Natural killer cell (primary cell): ENCODE measurements at regions of chr10 and their contacts with region 1.

Region 1: GRCh38 chr10:71383972-71384687 is 12.6 kb upstream of the CDH23 start:
- DNase-seq: peak; percentile 77 to 82
- ATAC-seq: peak; percentile 89 to 98 (median 97)
- H3K4me3 ChIP-seq: no peak overlapping the region
- H3K4me3 Mint-ChIP-seq: no peak overlapping the region
- H3K27ac ChIP-seq: no peak overlapping the region
- H3K27ac Mint-ChIP-seq: no peak overlapping the region
- H3K4me1 ChIP-seq: peaks cover 8% of the 10 kb centered on the region
- H3K4me1 Mint-ChIP-seq: peaks cover 0 to 8% of the 10 kb centered on the region in 2 donors
- H3K27me3 ChIP-seq: no peaks in the 10 kb centered on the region
- H3K27me3 Mint-ChIP-seq: peaks cover 0 to 10% of the 10 kb centered on the region in 2 donors
- CTCF ChIP-seq: peak; percentile 89

Region 2: DNA sequence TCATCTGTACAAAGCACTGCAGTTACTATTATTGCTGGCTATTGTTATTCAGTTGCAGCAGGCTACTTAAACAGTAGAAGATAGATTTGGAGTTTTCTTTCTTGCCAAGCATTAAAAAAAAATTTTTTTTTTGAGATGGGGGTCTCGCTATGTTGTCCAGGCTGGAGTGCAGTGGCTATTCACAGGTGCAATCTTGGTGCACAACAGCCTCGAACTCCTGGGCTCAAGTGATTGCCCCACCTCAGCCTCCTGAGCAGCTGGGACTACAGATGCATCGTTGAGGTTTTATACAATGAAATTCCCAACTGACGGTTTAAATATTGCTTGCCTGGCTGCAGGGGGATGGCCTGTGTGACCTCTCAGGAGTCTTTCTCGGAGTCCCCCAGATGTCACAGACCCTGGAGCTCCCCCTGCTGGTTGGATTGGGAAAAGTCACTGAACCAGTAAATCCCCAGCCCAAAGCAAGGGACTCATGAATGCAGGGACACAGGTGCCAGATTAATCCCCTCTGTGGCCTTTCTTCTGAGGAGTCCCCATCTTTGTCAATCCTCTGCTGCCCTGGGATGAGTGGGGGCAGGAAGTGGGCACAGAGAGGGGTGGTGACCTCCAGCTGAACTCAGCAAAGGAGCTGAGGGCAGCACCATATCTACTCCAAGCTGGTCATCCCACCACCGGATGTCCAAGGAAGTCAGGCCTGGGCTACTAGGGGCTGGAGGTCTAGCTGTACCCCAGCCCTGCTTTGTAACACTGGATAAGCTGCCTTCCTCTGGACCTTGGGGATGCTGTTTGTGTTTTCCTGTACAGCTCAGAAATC is 185.9 kb after region 1 on chr10:
- intact Hi-C with region 1: loop called (anchors 1 kb)
- DNase-seq: peak; percentile 69 to 82
- ATAC-seq: peak; percentile 58 to 75 (median 66)
- H3K4me3 ChIP-seq: no peak overlapping the region
- H3K4me3 Mint-ChIP-seq: no peak overlapping the region
- H3K27ac ChIP-seq: no peak overlapping the region
- H3K27ac Mint-ChIP-seq: no peak overlapping the region
- H3K4me1 ChIP-seq: no peaks in the 10 kb centered on the region
- H3K4me1 Mint-ChIP-seq: no peaks in the 10 kb centered on the region
- H3K27me3 ChIP-seq: no peaks in the 10 kb centered on the region
- H3K27me3 Mint-ChIP-seq: no peaks in the 10 kb centered on the region
- CTCF ChIP-seq: peak; percentile 77

Region 3: DNA sequence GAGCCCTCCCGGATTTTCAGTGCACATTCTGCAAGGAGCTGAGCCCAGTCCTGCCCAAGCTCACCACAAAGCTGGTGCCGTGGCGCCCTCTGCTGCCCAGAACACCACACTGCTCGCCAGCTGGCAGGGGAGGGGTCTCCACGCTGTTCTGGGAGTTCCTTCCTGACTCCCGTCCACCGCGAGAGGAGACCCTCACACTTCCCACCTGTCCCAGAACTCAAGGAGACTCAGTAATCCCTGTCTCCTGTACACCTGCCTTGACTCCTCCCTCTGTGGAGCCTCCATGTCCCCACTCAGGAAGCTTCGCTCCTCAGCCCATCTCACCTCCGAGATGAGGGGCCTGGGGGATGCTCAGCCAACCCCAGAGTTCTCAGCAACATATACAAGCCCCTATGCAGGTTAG is 324.2 kb after region 1 on chr10:
- intact Hi-C with region 1: loop called (anchors 1 kb)
- DNase-seq: peak; percentile 62 to 80
- ATAC-seq: peak; percentile 60 to 93 (median 90)
- H3K4me3 ChIP-seq: no peak overlapping the region
- H3K4me3 Mint-ChIP-seq: no peak overlapping the region
- H3K27ac ChIP-seq: no peak overlapping the region
- H3K27ac Mint-ChIP-seq: no peak overlapping the region
- H3K4me1 ChIP-seq: peaks cover 35% of the 10 kb centered on the region
- H3K4me1 Mint-ChIP-seq: peaks cover 8 to 23% of the 10 kb centered on the region in 2 donors
- H3K27me3 ChIP-seq: no peaks in the 10 kb centered on the region
- H3K27me3 Mint-ChIP-seq: no peaks in the 10 kb centered on the region
- CTCF ChIP-seq: peak; percentile 95

Region 4: GRCh38 chr10:71812016-71812912 is 428.1 kb after region 1 on chr10:
- intact Hi-C with region 1: loop called (anchors 5 kb)
- DNase-seq: peak; percentile 75 to 88
- ATAC-seq: peak; percentile 86 to 96 (median 96)
- H3K4me3 ChIP-seq: no peak overlapping the region
- H3K4me3 Mint-ChIP-seq: no peak overlapping the region
- H3K27ac ChIP-seq: no peak overlapping the region
- H3K27ac Mint-ChIP-seq: no peak overlapping the region
- H3K4me1 ChIP-seq: peaks cover 10% of the 10 kb centered on the region
- H3K4me1 Mint-ChIP-seq: no peaks in the 10 kb centered on the region
- H3K27me3 ChIP-seq: no peaks in the 10 kb centered on the region
- H3K27me3 Mint-ChIP-seq: peaks cover 0 to 5% of the 10 kb centered on the region in 2 donors
- CTCF ChIP-seq: peak; percentile 78